Activated T-helper 1 cell treated with anti-CD3 and anti-CD28 coated beads, Interleukin-12 subunit alpha, Interleukin-12 subunit beta, Interleukin-2, Interleukin-4 antibody, amounts not matched to agents 30 ng/mL and 10 ng/mL and 1 ng/mL, durations not matched to agents 14 hours and 24 hours and 36 hours (primary cell): ENCODE measurements at regions of chr3 and their contacts with region 1.

Region 1: DNA sequence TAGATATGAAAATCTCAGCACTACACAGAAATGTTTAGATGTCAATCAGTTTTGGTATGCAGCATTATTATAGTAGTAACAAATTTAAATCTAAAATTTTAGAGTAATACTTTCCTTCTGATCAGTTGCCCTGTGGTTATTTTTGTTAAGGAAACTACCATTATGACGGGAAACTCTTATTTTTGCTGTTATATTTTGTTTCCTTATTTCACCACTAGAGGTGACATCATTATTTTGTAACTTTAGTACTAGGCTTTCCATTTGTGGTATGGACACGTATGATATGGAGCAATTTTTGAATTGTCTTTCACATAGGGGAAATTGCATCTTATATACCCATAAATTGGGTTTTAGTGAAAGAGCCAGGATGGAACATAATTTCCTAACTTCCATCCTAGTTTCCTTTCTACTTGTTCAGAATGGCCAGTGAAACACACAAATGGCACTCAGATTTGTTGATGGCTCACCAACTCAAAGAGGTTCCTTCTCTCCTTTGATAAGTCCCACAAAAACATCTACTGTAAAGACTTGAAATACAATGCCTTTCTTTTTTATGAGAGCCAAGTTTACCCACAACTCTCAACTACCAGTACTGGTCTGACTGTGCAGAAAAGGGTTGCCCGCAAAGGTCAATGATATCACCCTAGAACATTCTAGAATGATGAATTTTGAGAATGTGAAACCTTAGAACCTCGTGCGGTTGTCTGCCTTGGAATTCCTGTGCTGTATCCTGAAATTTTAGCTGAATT is 19.4 kb upstream of the PPP4R2 start:
- DNase-seq: no peak
- H3K4me3 Mint-ChIP-seq: no peak overlapping the region
- H3K27ac Mint-ChIP-seq: peak overlapping the region; percentile 85
- H3K4me1 Mint-ChIP-seq: peaks cover 24% of the 10 kb centered on the region
- H3K27me3 Mint-ChIP-seq: peaks cover 4% of the 10 kb centered on the region

Region 2: DNA sequence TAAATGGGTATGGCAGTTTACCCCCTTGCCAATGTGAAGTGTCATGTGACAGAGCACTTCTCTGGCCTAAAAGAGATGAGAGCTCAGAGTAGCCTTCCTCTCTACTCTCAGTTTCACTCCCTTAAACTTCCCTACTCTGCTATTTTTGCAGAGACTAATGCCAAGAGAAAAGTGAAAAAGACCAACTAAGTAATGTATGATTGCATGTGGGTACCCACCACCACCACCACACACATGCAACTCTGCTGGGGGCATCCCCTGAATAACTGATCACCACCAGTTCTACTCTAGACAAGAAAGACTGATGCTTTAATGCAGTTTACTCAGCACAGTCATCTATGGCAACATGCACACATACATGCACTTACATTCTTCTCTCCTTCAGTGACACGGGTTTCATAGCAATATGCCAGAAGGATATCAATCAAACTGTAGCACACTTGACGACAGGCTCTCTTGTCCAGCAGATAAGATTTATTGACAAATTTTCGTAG is 160.3 kb before region 1 on chr3:
- intact Hi-C with region 1: no loop called
- DNase-seq: no peak
- H3K4me3 Mint-ChIP-seq: no peak overlapping the region
- H3K27ac Mint-ChIP-seq: no peak overlapping the region
- H3K4me1 Mint-ChIP-seq: peaks cover 36% of the 10 kb centered on the region
- H3K27me3 Mint-ChIP-seq: no peaks in the 10 kb centered on the region

Region 3: DNA sequence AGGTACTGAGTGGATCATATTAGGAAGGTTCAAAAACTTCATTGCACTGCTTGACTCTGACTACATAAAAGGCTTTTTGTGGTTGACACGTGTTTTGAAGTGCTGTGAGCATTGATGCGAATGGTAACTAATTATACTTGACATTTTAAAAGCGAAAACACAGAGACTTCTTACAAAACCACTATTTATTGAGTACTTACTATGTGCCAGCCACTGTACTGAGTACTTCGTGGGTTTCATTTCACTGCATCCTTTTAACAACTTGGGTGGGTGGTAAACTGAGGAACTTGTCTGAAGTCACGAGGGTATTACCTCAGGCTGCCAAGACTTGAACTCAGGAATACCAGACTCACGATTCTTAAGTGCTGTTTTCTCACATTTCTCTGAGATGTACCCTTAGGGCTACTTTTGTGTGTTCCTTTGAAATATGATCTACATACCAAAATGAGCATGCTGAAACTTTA is 25.9 kb before region 1 on chr3:
- intact Hi-C with region 1: loop called (anchors 1 kb)
- DNase-seq: no peak
- H3K4me3 Mint-ChIP-seq: no peak overlapping the region
- H3K27ac Mint-ChIP-seq: no peak overlapping the region
- H3K4me1 Mint-ChIP-seq: peaks cover 11% of the 10 kb centered on the region
- H3K27me3 Mint-ChIP-seq: peaks cover 11% of the 10 kb centered on the region

Region 4: DNA sequence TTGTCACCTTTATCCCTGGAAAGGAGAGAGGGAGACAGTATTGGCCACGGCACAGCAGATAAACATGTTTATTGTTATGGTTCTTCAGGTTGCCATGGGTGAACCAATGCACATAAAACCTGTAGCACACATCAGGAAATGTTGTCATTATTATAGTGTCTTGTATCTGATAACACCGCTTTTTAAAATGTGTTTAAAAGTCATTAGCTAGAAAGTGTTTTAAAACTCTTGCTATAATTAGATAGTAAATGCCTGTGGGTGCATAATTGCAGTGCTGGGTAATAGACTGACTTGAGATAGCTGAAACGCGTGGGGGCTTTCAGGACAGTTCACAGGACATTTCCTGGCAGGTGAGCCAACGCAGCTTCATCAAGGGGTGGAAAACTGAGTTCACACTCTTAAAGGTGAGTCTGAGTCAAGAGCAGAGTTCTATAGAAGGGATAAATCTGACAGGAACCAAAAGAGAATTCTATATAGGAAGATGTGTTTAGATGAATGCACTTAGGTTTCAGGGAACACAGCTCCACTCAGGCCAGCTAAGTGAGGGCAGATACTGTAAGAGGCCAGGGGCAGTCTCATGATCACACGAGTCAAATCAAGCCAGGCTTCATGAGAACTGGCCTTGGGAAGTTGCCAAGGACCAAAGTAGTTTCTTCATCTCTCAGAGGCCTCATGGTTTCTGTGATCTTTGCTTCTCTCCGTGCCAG is 16.3 kb before region 1 on chr3:
- intact Hi-C with region 1: loop called (anchors 1 kb)
- DNase-seq: no peak
- H3K4me3 Mint-ChIP-seq: no peak overlapping the region
- H3K27ac Mint-ChIP-seq: no peak overlapping the region
- H3K4me1 Mint-ChIP-seq: peaks cover 41% of the 10 kb centered on the region
- H3K27me3 Mint-ChIP-seq: peaks cover 7% of the 10 kb centered on the region

Region 5: DNA sequence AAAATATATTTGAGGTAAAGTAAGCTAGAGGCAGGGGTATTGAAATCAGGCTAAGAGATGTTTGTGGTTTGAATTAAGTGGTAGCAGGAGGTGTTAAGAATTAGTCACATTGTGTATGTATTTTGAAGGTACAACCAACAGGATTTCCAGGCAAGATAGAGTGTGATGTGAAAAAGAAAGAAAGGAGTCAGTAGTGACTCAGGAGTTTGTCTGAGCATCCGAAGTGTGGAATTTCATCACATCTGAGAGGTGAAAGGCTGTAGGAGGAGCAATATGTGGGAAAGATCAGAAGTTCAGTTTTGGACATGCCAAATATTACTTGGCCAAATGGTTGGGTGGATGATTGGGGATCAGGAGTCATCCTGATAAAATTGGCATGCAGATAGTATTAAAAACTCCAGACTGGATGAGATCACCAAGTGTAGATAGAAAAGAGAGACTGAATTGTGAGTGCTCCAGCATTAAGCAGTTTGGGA is 52.1 kb after region 1 on chr3:
- intact Hi-C with region 1: loop called (anchors 1 kb)
- DNase-seq: no peak
- H3K4me3 Mint-ChIP-seq: peak overlapping the region; percentile 1
- H3K27ac Mint-ChIP-seq: peak overlapping the region; percentile 70
- H3K4me1 Mint-ChIP-seq: peaks cover 56% of the 10 kb centered on the region
- H3K27me3 Mint-ChIP-seq: no peaks in the 10 kb centered on the region